A549 (cell line): ENCODE measurements at regions of chr10 and their contacts with region 1.

Region 1: DNA sequence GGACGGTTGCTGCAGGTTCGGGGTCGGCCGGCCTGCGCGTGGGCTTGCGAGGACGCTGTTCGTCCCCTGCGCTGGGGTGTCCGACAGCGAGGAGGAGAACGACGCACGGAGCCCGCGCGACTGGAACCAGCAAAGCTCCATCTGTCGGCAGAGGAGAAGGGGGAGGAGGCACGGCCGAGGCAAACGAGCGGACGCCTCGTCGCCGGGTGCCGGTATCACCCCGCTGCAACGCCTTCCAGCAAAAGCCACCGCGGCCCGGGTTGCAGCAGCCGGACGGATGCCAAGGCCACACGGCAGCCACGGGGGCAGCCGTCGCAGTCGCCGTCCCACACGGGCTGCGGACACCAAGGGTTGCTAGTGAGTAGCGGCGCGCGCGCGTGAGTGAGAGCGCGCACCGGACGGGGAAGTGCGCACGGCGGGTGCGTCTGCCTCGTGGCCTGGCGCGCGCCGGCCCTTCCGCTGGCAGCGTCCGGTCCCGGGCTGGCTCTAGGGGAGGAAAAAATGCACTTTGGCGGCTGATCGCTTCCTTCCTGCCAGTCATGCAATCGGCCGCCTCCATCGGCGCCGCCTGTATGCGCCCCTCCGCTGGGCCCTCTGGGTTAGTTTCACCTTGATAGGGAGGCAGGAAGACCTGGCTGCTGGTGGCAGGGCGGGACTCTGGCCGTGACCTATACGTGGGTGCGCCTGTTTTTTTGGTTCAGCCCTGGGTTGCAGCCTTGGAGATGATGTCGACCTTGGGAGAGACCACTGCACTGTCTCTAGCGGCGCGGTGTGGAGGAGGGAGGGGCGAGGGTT is 434 bp downstream of the STAMBPL1 start:
- DNase-seq: peak; percentile 69 to 86
- ATAC-seq: peak; percentile 90 to 92
- H3K4me3 ChIP-seq: peak overlapping the region; percentile 49
- H3K27ac ChIP-seq: peak overlapping the region; percentile 97 to 98
- H3K4me1 ChIP-seq: peaks cover 33% of the 10 kb centered on the region
- CTCF ChIP-seq: peak; percentile 37; the same call in 2 of the 3 replicates
- EP300 ChIP-seq: no peak
- POLR2A ChIP-seq: peak; percentile 53
- RAD21 ChIP-seq: 0 out of 5 replicates have a peak, but pooled peaks of 1 of the 2 experiments have one; percentile 13

Region 2: DNA sequence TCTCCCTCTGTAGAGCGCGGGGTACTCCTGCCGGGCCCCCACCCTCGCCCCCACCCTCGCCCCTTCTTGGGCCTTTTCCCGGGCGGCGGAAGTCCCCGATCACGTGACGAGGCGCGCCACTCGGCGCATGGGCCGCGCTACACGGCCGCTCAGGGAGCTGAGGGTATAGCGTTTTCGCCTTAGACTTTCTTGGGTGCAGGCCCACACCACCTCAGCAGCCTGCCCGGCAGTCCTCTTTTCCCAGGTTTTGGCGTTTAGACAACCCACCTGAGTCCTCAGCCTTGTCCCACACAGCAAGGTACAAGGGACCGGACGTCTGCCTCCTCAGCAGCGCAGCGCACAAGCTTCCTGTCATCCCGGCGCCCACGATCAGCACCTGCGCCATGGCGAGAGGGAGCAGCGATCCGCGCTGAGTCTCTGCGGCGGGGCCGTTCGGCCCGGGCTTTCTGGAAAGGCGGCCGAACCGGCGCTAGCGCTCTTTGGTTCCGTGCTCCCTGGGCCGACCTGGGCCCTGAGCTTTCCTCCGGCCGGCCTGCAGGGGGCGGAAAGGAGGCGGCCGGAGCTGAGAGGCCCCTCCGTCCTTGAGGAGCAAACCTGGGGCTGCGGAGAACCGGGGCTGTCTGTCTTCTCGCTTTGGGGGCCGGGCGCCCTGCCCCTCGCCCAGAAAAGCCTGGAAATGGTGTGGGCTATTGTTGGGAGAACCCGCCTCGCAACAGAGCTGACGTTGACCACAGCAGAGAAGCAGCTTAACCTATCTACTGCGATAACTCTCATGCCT is 297.5 kb before region 1 on chr10 and contains the start of gene RNLS:
- CTCF ChIA-PET with region 1: no interaction called
- POLR2A ChIA-PET with region 1: interaction called, 10 read pairs
- DNase-seq: peak; percentile 21 to 74
- ATAC-seq: peak; percentile 94 to 96
- H3K4me3 ChIP-seq: peak within 1 kb of the TSS; percentile 67
- H3K27ac ChIP-seq: peak within 1 kb of the TSS; percentile 90 to 93
- H3K4me1 ChIP-seq: no peaks in the 10 kb centered on the region
- CTCF ChIP-seq: peak; percentile 61
- EP300 ChIP-seq: no peak
- POLR2A ChIP-seq: peak; percentile 62
- RAD21 ChIP-seq: peak; percentile 26 to 54; a peak in 4 of 5 replicates
- polyA plus RNA-seq, gene RNLS: 16.8 and 20.0 TPM in 2 replicates

Region 3: DNA sequence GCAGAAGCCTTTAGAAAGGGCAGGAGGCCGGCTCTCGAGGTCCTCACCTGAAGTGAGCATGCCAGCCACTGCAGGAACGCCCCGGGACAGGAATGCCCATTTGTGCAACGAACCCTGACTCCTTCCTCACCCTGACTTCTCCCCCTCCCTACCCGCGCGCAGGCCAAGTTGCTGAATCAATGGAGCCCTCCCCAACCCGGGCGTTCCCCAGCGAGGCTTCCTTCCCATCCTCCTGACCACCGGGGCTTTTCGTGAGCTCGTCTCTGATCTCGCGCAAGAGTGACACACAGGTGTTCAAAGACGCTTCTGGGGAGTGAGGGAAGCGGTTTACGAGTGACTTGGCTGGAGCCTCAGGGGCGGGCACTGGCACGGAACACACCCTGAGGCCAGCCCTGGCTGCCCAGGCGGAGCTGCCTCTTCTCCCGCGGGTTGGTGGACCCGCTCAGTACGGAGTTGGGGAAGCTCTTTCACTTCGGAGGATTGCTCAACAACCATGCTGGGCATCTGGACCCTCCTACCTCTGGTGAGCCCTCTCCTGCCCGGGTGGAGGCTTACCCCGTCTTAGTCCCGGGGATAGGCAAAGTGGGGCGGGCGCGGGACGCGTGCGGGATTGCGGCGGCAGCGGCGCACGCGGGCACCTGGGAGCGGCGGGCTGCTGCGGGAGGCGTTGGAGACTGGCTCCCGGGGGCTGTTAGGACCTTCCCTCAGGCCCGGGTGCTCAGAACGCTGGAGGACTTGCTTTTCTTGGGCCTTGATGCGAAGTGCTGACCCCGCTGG is 110.1 kb after region 1 on chr10 and contains the start of gene FAS:
- CTCF ChIA-PET with region 1: no interaction called
- POLR2A ChIA-PET with region 1: no interaction called
- DNase-seq: peak; percentile 66 to 69
- ATAC-seq: peak; percentile 89 to 92
- H3K4me3 ChIP-seq: peak within 1 kb of the TSS; percentile 59
- H3K27ac ChIP-seq: peak within 1 kb of the TSS; percentile 85 to 96
- H3K4me1 ChIP-seq: peaks cover 31% of the 10 kb centered on the region; the same call in 2 of the 3 replicates
- CTCF ChIP-seq: no peak
- EP300 ChIP-seq: no peak
- POLR2A ChIP-seq: 0 out of 2 replicates have a peak, but pooled peaks have one; percentile 33
- RAD21 ChIP-seq: no peak
- polyA plus RNA-seq, gene FAS: 29.5 and 30.1 TPM in 2 replicates

Region 4: DNA sequence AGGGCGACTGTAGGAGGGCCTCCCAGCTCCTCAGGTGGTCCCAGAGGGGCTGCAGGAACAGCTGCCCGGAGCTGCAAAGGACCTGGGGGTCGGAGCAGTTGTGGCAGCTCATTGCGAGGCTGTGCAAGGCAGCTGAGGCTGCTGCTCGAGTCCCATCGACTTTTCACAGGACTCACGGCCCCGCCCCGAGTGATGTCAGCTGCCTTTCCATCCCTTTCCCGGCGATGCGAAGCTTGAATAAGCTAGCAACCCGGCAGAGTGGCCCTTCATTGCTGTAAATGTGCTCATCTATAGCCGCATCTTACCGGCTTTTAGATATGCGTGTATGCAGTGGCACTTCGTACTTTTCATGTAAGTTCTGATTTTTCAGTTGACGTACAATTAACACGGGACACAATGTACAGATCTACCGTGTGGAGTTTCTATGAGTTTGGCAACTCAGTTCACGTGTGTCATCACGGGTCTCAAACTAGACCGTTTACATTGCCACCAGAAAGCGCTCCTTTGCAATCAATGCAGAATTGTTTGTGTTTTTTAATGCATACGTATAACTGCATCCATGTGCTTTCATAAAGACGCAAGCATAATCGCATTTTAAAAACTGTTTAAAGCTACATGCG is 326.8 kb after region 1 on chr10 and contains the start of gene CH25H:
- CTCF ChIA-PET with region 1: no interaction called
- POLR2A ChIA-PET with region 1: no interaction called
- DNase-seq: peak; percentile 39 to 46
- ATAC-seq: peak; percentile 86 to 88
- H3K4me3 ChIP-seq: peak within 1 kb of the TSS; percentile 49
- H3K27ac ChIP-seq: peak within 1 kb of the TSS; percentile 21 to 34; a peak in 2 of 6 replicates
- H3K4me1 ChIP-seq: peaks cover 7% of the 10 kb centered on the region; the same call in 1 of the 3 replicates
- CTCF ChIP-seq: no peak
- EP300 ChIP-seq: no peak
- POLR2A ChIP-seq: no peak
- RAD21 ChIP-seq: no peak
- polyA plus RNA-seq, gene CH25H: 0.05 TPM in 1 of 2 replicates, not detected in the other